Natural killer cell (primary cell): ENCODE measurements at regions of chr7 and their contacts with region 1.

Region 1: DNA sequence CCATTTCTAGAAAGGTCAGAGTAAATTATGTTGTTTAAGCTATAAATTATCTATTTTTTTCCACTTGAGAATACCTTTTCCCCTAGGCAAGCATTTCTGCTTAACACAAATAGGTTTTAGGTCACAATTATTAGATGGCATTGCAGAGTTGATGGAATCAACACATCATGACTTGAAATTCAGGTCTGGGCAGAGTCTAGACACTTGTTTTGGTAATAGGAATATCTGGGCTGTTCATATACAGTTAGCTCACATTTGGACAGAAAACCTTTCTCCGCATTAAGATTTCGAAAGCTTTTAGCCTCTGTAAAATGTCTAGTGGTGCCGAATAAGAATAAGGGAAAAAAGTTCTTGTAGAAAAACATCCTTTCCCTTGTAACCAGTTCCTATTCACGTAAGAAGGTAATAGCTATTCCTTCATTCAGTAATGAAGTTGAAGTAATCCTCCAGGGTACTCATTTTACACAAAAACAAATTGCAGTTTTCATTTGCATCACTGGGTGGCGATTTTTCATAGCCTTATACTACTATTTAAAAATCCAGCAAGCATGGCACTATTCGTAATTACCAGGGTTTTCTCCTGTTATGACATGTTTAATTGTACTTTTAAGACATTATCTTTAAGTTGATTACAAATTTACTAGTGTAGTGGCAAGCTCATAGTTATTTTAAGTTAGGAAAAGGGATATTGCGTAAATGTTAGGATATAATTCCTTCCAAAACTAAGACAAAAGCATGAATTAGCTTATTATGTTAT is 37.0 kb downstream of the RPA3 start:
- DNase-seq: peak in 1 of 2 donors; percentile 79
- ATAC-seq: peak; percentile 66 to 87 (median 77)
- H3K4me3 ChIP-seq: no peak overlapping the region
- H3K4me3 Mint-ChIP-seq: no peak overlapping the region
- H3K27ac ChIP-seq: peak overlapping the region; percentile 42
- H3K27ac Mint-ChIP-seq: peak overlapping the region; percentile 59 to 62
- H3K4me1 ChIP-seq: no peaks in the 10 kb centered on the region
- H3K4me1 Mint-ChIP-seq: peaks cover 25 to 29% of the 10 kb centered on the region in 2 donors
- H3K27me3 ChIP-seq: no peaks in the 10 kb centered on the region
- H3K27me3 Mint-ChIP-seq: no peaks in the 10 kb centered on the region
- CTCF ChIP-seq: peak; percentile 77

Region 2: DNA sequence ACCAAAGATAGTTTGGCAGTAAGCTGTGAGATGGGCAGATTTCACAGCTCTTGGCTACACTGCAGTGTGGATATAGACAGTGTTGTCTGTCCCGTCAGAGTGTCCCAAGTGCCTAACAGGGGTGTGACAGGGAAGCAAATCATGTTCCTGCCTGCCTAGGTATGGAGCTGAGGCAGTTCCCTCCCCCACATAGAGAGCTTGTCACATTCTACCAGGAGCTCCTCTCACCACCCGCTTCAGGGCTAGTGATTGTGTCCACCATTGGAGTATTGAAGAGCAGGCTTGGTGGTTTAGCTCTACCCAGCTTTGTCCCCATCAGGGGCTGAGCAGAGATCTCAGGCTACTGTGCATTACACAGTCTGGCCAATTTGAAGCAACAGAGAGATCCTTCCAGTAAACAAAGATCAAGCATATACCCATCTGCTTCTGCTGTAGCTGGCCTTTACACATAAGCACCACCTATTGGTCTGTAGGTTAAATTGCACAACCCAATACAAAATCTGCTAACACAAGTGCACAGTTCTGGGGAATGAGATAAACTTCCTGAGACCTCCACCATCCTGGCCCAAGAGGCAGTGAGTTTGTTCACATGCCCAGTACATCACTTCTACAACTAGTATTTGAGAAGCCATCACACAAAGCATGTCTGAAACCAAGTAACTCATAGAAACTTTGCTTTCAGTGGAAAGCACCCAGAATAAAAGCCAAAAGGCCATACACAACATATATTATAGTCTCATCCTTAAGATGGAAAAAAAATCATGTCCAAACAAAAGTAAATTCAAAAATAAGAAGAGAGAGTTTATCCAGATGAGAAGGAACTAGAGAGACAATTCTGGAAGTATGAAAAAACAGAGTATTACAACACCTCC is 354.5 kb after region 1 on chr7:
- intact Hi-C with region 1: loop called (anchors 1 kb)
- DNase-seq: peak in 1 of 2 donors; percentile 68
- ATAC-seq: peak; percentile 92 to 99 (median 97)
- H3K4me3 ChIP-seq: no peak overlapping the region
- H3K4me3 Mint-ChIP-seq: no peak overlapping the region
- H3K27ac ChIP-seq: peak overlapping the region; percentile 6
- H3K27ac Mint-ChIP-seq: peak overlapping the region; percentile 46 to 82
- H3K4me1 ChIP-seq: peaks cover 15% of the 10 kb centered on the region
- H3K4me1 Mint-ChIP-seq: peaks cover 28 to 34% of the 10 kb centered on the region in 2 donors
- H3K27me3 ChIP-seq: no peaks in the 10 kb centered on the region
- H3K27me3 Mint-ChIP-seq: no peaks in the 10 kb centered on the region
- CTCF ChIP-seq: peak; percentile 79

Region 3: DNA sequence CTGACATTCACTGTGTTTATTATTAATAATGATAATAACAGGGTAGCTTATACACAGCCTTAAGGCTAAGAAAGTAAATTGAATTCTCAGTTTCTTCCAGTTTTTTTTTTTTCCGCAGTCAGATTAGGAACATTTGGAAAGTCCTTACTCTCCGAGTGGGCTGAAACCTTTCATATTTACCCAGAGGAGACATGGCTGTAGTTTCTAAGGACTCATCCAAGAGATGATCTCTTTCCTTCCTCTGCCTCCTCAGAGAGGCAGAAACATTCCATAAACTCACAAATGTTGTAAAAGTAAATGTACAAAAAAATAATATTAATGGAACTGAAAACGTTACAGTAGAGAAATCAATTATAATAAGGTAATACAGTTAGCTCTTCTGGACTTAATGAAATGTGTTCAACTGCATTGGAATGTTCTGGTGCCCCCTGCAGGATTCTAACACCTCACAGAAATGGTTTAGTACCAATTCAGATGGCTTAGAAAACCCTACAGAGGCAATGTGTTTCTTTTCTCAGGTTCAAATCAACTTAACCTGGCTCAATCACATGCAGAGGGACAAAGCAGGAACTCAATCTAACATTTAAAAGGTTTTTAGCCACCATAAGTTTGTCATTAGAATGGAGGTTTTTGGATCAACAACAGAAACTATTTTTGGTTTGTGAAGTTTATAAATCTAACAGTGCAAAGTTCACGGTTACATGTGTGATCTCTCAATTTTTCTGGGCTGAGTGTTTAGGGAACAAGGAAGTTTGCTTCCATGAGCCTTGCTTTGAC is 508.9 kb after region 1 on chr7:
- intact Hi-C with region 1: loop called (anchors 1 kb)
- DNase-seq: peak; percentile 33 to 87
- ATAC-seq: peak; percentile 68 to 90 (median 88)
- H3K4me3 ChIP-seq: no peak overlapping the region
- H3K4me3 Mint-ChIP-seq: no peak overlapping the region
- H3K27ac ChIP-seq: no peak overlapping the region
- H3K27ac Mint-ChIP-seq: no peak overlapping the region
- H3K4me1 ChIP-seq: peaks cover 6% of the 10 kb centered on the region
- H3K4me1 Mint-ChIP-seq: peaks cover 11 to 26% of the 10 kb centered on the region in 2 donors
- H3K27me3 ChIP-seq: peaks cover 4% of the 10 kb centered on the region
- H3K27me3 Mint-ChIP-seq: peaks cover 8 to 9% of the 10 kb centered on the region in 2 donors
- CTCF ChIP-seq: peak; percentile 85

Region 4: GRCh38 chr7:8217200-8218068 is 536.1 kb after region 1 on chr7:
- intact Hi-C with region 1: loop called (anchors 1 kb)
- DNase-seq: peak in 1 of 2 donors; percentile 86
- ATAC-seq: peak; percentile 75 to 79 (median 77)
- H3K4me3 ChIP-seq: no peak overlapping the region
- H3K4me3 Mint-ChIP-seq: no peak overlapping the region
- H3K27ac ChIP-seq: no peak overlapping the region
- H3K27ac Mint-ChIP-seq: no peak overlapping the region
- H3K4me1 ChIP-seq: no peaks in the 10 kb centered on the region
- H3K4me1 Mint-ChIP-seq: peaks cover 5 to 6% of the 10 kb centered on the region in 2 donors
- H3K27me3 ChIP-seq: no peaks in the 10 kb centered on the region
- H3K27me3 Mint-ChIP-seq: peaks cover 0 to 4% of the 10 kb centered on the region in 2 donors
- CTCF ChIP-seq: peak; percentile 81